ENCODE measurements at regions of chr9 and their contacts with region 1.

Region 1: GRCh38 chr9:100590481-100590880 is 12.6 kb downstream of the CAVIN4 start:
- DNase-seq: peak; percentile 95
- ATAC-seq: peak; percentile 96
- H3K4me3 ChIP-seq: no peak overlapping the region
- H3K27ac ChIP-seq: no peak overlapping the region
- H3K4me1 ChIP-seq: peaks cover 14% of the 10 kb centered on the region
- H3K27me3 ChIP-seq: no peaks in the 10 kb centered on the region
- CTCF ChIP-seq: no peak
- POLR2A ChIP-seq: no peak
- RAD21 ChIP-seq: 0 out of 2 replicates have a peak, but pooled peaks have one; percentile 10

Region 2: DNA sequence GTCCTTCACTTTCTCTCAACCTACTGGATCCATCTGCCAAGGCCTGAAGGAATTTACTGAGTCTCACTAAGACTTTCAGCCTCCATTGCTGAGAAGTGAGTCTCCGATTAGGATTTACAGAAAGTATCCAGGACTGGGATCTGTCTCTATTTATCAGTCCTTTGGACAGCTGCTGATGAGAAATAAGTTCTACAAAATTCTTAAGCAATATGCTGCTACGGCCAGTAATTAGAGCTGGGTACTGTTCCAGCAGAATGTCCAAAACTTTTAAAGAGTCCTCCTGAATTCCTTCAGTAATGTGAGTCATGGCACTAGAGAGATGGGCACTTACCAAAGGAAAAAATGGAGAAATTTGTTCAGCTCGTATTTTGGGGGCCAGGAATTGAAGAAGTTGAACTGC is 243.6 kb before region 1 on chr9:
- CTCF ChIA-PET with region 1: no interaction called
- POLR2A ChIA-PET with region 1: no interaction called
- dilution Hi-C with region 1: no loop called
- in situ Hi-C with region 1: loop called (anchors 10 kb)
- intact Hi-C with region 1: loop called (anchors 5 kb)
- DNase-seq: peak; percentile 53
- ATAC-seq: peak; percentile 77
- H3K4me3 ChIP-seq: no peak overlapping the region
- H3K27ac ChIP-seq: peak overlapping the region; percentile 1; the same call in 1 of the 2 replicates
- H3K4me1 ChIP-seq: peaks cover 2% of the 10 kb centered on the region; the same call in 1 of the 2 replicates
- H3K27me3 ChIP-seq: no peaks in the 10 kb centered on the region
- CTCF ChIP-seq: no peak
- POLR2A ChIP-seq: no peak
- RAD21 ChIP-seq: no peak

Region 3: GRCh38 chr9:100426530-100427428 is 163.7 kb before region 1 on chr9 and contains the start of gene MSANTD3:
- CTCF ChIA-PET with region 1: interaction called, 3 read pairs
- POLR2A ChIA-PET with region 1: interaction called, 3 read pairs
- dilution Hi-C with region 1: no loop called
- in situ Hi-C with region 1: no loop called
- intact Hi-C with region 1: loop called (anchors 5 kb)
- DNase-seq: peak; percentile 76
- ATAC-seq: peak; percentile 64
- H3K4me3 ChIP-seq: peak within 1 kb of the TSS; percentile 66
- H3K27ac ChIP-seq: peak within 1 kb of the TSS; percentile 95
- H3K4me1 ChIP-seq: peaks cover 17% of the 10 kb centered on the region
- H3K27me3 ChIP-seq: no peaks in the 10 kb centered on the region
- CTCF ChIP-seq: peak; percentile 31
- POLR2A ChIP-seq: peak; percentile 90
- RAD21 ChIP-seq: no peak; the same call in 1 of the 2 replicates
- total RNA-seq, gene MSANTD3: 55.9 and 71.1 TPM in 2 replicates

Region 4: GRCh38 chr9:100455470-100455869 is 135.0 kb before region 1 on chr9:
- CTCF ChIA-PET with region 1: no interaction called
- POLR2A ChIA-PET with region 1: no interaction called
- dilution Hi-C with region 1: no loop called
- in situ Hi-C with region 1: loop called (anchors 10 kb)
- intact Hi-C with region 1: no loop called
- DNase-seq: peak; percentile 63
- ATAC-seq: peak; percentile 73
- H3K4me3 ChIP-seq: no peak overlapping the region
- H3K27ac ChIP-seq: no peak overlapping the region
- H3K4me1 ChIP-seq: peaks cover 3% of the 10 kb centered on the region; the same call in 1 of the 2 replicates
- H3K27me3 ChIP-seq: no peaks in the 10 kb centered on the region
- CTCF ChIP-seq: no peak
- POLR2A ChIP-seq: no peak
- RAD21 ChIP-seq: no peak

Region 5: DNA sequence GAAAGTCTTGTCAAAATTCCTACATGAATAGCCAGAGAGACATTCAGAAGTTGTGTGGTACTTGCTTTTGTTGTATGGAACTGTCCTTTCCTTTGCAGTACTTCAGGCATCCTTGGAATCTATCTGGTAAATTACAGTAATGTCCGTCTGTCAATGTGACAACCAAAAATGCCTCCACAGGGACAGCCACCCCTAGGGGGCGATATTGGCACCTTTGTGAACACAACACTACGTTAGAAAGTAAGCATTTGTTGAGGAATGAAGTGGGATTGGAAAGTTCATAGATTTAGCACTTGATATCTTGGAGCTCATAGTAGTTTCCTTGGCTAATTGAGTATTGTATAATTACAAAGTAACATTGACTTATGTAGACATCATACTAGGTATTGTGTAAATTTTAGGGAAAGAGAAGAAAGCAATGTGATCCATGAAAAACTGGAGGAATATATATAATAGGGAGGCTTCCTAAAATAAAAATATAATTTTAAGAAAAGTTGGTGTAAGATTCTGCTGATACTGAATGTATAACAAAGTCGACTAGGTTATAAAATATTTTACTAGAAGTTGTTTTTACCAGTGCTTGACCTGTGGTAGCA is 84.8 kb before region 1 on chr9:
- CTCF ChIA-PET with region 1: no interaction called
- POLR2A ChIA-PET with region 1: no interaction called
- dilution Hi-C with region 1: no loop called
- in situ Hi-C with region 1: no loop called
- intact Hi-C with region 1: loop called (anchors 5 kb)
- DNase-seq: peak; percentile 30
- ATAC-seq: no peak
- H3K4me3 ChIP-seq: no peak overlapping the region
- H3K27ac ChIP-seq: no peak overlapping the region
- H3K4me1 ChIP-seq: peaks cover 3% of the 10 kb centered on the region
- H3K27me3 ChIP-seq: no peaks in the 10 kb centered on the region
- CTCF ChIP-seq: peak; percentile 54
- POLR2A ChIP-seq: no peak
- RAD21 ChIP-seq: peak; percentile 37; the same call in 1 of the 2 replicates

Measured in IMR-90 (cell line).